ENCODE measurements at regions of chr5 and their contacts with region 1.

Region 1: GRCh38 chr5:67246108-67246507 is 49.5 kb upstream of the CD180 start:
- DNase-seq: peak; percentile 93
- H3K4me3 ChIP-seq: no peak overlapping the region
- H3K27ac ChIP-seq: peak overlapping the region; percentile 98
- H3K4me1 ChIP-seq: peaks cover 65% of the 10 kb centered on the region
- H3K27me3 ChIP-seq: no peaks in the 10 kb centered on the region
- CTCF ChIP-seq: peak; percentile 83

Region 2: DNA sequence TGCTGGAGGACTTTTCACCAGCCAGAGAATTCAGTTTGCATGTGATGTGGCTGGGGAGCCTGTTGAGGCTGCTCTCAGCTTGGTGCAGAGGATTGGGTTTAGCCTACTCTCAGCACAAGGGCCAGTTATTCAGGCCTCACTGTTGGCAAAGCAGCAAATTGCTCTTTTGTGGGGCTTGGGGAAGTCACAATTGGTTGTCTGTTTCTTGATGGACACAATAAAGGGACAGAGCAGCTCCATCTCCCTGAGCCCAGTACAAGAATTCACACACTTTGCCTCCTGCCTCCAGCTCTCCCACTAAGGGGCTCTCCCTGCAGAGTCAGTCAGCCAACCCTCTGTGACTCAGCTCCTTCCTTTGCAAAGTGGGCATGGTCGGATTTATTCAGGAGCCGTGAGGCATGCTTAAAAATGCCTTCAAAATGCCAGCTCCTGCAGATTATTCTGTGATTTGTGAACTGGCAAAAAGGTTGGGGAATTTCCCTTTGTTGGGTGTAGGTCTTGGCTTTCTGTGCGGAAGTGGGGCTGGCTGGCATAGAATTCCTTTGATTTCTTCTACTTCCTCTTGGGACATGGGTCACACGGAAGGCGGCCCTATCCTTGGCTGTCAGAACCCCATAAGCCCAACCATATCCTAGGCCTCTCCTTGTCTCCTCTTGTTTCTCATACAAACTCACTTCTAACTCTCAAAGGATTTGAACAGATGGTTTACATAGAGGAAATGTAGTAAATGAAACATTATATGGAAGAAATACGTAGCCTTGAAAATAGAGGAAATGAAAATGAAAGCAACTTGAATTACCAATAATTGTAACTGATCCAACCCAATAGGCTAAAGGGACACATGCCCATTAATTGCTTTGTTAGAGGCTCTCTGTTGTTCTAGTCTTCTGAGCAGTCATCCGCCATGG is 69.2 kb after region 1 on chr5:
- CTCF ChIA-PET with region 1: no interaction called
- POLR2A ChIA-PET with region 1: interaction called, 14 read pairs
- intact Hi-C with region 1: no loop called
- DNase-seq: peak; percentile 58
- H3K4me3 ChIP-seq: no peak overlapping the region
- H3K27ac ChIP-seq: peak overlapping the region; percentile 57
- H3K4me1 ChIP-seq: peaks cover 10% of the 10 kb centered on the region
- H3K27me3 ChIP-seq: no peaks in the 10 kb centered on the region
- CTCF ChIP-seq: no peak

Region 3: GRCh38 chr5:67437905-67438845 is 192.1 kb after region 1 on chr5:
- CTCF ChIA-PET with region 1: no interaction called
- POLR2A ChIA-PET with region 1: no interaction called
- intact Hi-C with region 1: loop called (anchors 5 kb)
- DNase-seq: peak; percentile 99
- H3K4me3 ChIP-seq: no peak overlapping the region
- H3K27ac ChIP-seq: peak overlapping the region; percentile 79
- H3K4me1 ChIP-seq: peaks cover 45% of the 10 kb centered on the region
- H3K27me3 ChIP-seq: no peaks in the 10 kb centered on the region
- CTCF ChIP-seq: no peak

Region 4: GRCh38 chr5:67636091-67636490 is 390.0 kb after region 1 on chr5:
- CTCF ChIA-PET with region 1: no interaction called
- POLR2A ChIA-PET with region 1: no interaction called
- intact Hi-C with region 1: loop called (anchors 5 kb)
- DNase-seq: no peak
- H3K4me3 ChIP-seq: no peak overlapping the region
- H3K27ac ChIP-seq: no peak overlapping the region
- H3K4me1 ChIP-seq: peaks cover 14% of the 10 kb centered on the region
- H3K27me3 ChIP-seq: no peaks in the 10 kb centered on the region
- CTCF ChIP-seq: no peak

Region 5: GRCh38 chr5:68252673-68253623 is 1006.8 kb after region 1 on chr5:
- CTCF ChIA-PET with region 1: interaction called, 20 read pairs
- POLR2A ChIA-PET with region 1: interaction called, 8 read pairs
- intact Hi-C with region 1: loop called (anchors 1 kb)
- DNase-seq: peak; percentile 86
- H3K4me3 ChIP-seq: peak overlapping the region; percentile 7
- H3K27ac ChIP-seq: peak overlapping the region; percentile 77
- H3K4me1 ChIP-seq: peaks cover 96% of the 10 kb centered on the region
- H3K27me3 ChIP-seq: no peaks in the 10 kb centered on the region
- CTCF ChIP-seq: peak; percentile 86

Region 6: GRCh38 chr5:68406767-68407241 is 1160.7 kb after region 1 on chr5:
- CTCF ChIA-PET with region 1: no interaction called
- POLR2A ChIA-PET with region 1: no interaction called
- intact Hi-C with region 1: loop called (anchors 5 kb)
- DNase-seq: peak; percentile 44
- H3K4me3 ChIP-seq: peak overlapping the region; percentile 30
- H3K27ac ChIP-seq: peak overlapping the region; percentile 80
- H3K4me1 ChIP-seq: peaks cover 45% of the 10 kb centered on the region
- H3K27me3 ChIP-seq: no peaks in the 10 kb centered on the region
- CTCF ChIP-seq: no peak

Measured in A673 (cell line).